Testis (tissue), 5 donors: ENCODE measurements at regions of chr2 and their contacts with region 1.

Region 1: GRCh38 chr2:10043906-10044601 is 704 bp downstream of the KLF11 start:
- DNase-seq: peak; percentile 96
- H3K4me3 ChIP-seq: peak overlapping the region; percentile 69 to 72
- H3K27ac ChIP-seq: peak overlapping the region; percentile 81 to 97
- H3K4me1 ChIP-seq: peaks cover 32% of the 10 kb centered on the region
- H3K27me3 ChIP-seq: no peaks in the 10 kb centered on the region
- CTCF ChIP-seq: no peak
- POLR2A ChIP-seq: no peak

Region 2: DNA sequence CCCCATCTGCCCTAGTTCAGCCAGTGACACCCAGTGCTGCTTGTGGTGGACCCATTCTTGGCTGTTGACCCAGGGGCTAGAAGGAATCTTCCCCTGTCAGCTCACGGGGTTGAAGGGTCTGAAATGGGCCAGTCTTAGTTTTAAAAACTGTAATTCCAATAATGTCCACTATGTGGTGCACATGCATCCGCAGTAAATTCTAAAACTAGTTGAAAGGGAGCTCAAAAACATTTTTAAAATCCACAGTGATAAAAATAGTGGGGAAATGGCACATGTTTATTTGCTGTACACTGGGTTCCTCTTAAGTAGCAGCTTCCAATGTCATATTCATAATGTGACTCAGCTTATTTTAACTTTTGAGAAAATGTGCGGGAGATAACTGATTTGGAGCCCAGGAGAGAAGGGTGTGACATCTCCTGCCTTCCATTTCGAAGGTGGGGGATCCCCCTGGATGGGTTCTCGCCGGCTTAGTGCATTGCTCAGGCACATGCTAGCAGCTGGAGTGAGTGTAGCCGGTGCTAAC is 59.8 kb before region 1 on chr2:
- intact Hi-C with region 1: loop called (anchors 10 kb)
- DNase-seq: no peak
- H3K4me3 ChIP-seq: no peak overlapping the region
- H3K27ac ChIP-seq: no peak overlapping the region
- H3K4me1 ChIP-seq: peaks cover 7% of the 10 kb centered on the region
- H3K27me3 ChIP-seq: no peaks in the 10 kb centered on the region
- CTCF ChIP-seq: peak; percentile 76 to 95 (median 76)
- POLR2A ChIP-seq: no peak

Region 3: GRCh38 chr2:10302479-10303180 is 258.6 kb after region 1 on chr2 and contains the start of gene HPCAL1:
- intact Hi-C with region 1: no loop called
- DNase-seq: peak; percentile 91
- H3K4me3 ChIP-seq: peak within 1 kb of the TSS; percentile 79 to 86
- H3K27ac ChIP-seq: peak within 1 kb of the TSS; percentile 68 to 74
- H3K4me1 ChIP-seq: peaks cover 25% of the 10 kb centered on the region
- H3K27me3 ChIP-seq: no peaks in the 10 kb centered on the region
- CTCF ChIP-seq: peak in 2 of 3 experiments; percentile 45 to 57
- POLR2A ChIP-seq: peak; percentile 87
- total RNA-seq, gene HPCAL1: 215 to 263 TPM